Heart right ventricle (tissue), 16 donors: ENCODE measurements at regions of chr13 and their contacts with region 1.

Region 1: GRCh38 chr13:43316946-43317353 is 293.6 kb downstream of the DNAJC15 start:
- DNase-seq: peak in 1 of 2 donors; percentile 8
- ATAC-seq: peak in 7 of 8 donors; percentile 23 to 76 (median 69)
- H3K4me3 ChIP-seq: peak overlapping the region in 2 of 10 donors; percentile 2 to 8
- H3K27ac ChIP-seq: peak overlapping the region in 1 of 10 donors; percentile 4
- H3K4me1 ChIP-seq: peaks cover 0 to 13% (median 8%) of the 10 kb centered on the region in 9 donors
- H3K27me3 ChIP-seq: no peaks in the 10 kb centered on the region
- CTCF ChIP-seq: no peak

Region 2: GRCh38 chr13:43374621-43375020 is 57.7 kb after region 1 on chr13:
- intact Hi-C with region 1: loop called in 1 of 10 experiments (anchors 5 kb)
- DNase-seq: no peak
- ATAC-seq: peak in 4 of 8 donors; percentile 22 to 62 (median 41)
- H3K4me3 ChIP-seq: no peak overlapping the region
- H3K27ac ChIP-seq: no peak overlapping the region
- H3K4me1 ChIP-seq: peaks cover 0 to 53% (median 18%) of the 10 kb centered on the region in 9 donors
- H3K27me3 ChIP-seq: peaks cover 0 to 34% (median 0%) of the 10 kb centered on the region in 7 donors
- CTCF ChIP-seq: no peak